ENCODE measurements at regions of chr16 and their contacts with region 1.

Region 1: GRCh38 chr16:82263521-82264143 is 93.6 kb upstream of the MPHOSPH6 start:
- DNase-seq: peak; percentile 75
- H3K4me3 Mint-ChIP-seq: no peak overlapping the region
- H3K27ac Mint-ChIP-seq: no peak overlapping the region
- H3K4me1 Mint-ChIP-seq: no peaks in the 10 kb centered on the region
- H3K27me3 Mint-ChIP-seq: peaks cover 75% of the 10 kb centered on the region
- CTCF ChIP-seq: peak; percentile 91

Region 2: GRCh38 chr16:81567987-81568748 is 695.5 kb before region 1 on chr16:
- CTCF ChIA-PET with region 1: no interaction called
- POLR2A ChIA-PET with region 1: no interaction called
- intact Hi-C with region 1: no loop called
- DNase-seq: peak; percentile 86
- H3K4me3 Mint-ChIP-seq: no peak overlapping the region
- H3K27ac Mint-ChIP-seq: peak overlapping the region; percentile 21
- H3K4me1 Mint-ChIP-seq: peaks cover 31% of the 10 kb centered on the region
- H3K27me3 Mint-ChIP-seq: no peaks in the 10 kb centered on the region
- CTCF ChIP-seq: no peak

Region 3: DNA sequence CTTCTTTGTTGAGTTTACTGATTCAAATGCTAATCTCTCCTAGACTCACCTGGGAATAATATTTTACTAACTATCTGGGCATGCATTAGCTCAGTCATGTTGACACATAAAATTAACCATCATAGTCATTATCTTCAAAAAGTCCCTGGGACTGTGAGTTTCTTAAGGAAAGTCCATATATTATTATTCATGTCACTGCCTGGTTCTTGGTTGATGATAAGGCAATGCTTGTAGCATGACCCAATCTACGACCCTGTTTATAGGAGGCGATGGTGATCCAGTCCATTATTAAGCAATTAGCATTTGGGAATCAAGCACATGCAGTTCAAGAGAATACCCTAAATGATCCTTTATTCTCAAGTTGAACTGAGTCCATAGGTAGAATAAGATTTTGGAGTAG is 38.8 kb before region 1 on chr16:
- CTCF ChIA-PET with region 1: interaction called, 11 read pairs
- POLR2A ChIA-PET with region 1: no interaction called
- intact Hi-C with region 1: no loop called
- DNase-seq: no peak
- H3K4me3 Mint-ChIP-seq: no peak overlapping the region
- H3K27ac Mint-ChIP-seq: no peak overlapping the region
- H3K4me1 Mint-ChIP-seq: no peaks in the 10 kb centered on the region
- H3K27me3 Mint-ChIP-seq: peaks cover 24% of the 10 kb centered on the region
- CTCF ChIP-seq: no peak

Region 4: DNA sequence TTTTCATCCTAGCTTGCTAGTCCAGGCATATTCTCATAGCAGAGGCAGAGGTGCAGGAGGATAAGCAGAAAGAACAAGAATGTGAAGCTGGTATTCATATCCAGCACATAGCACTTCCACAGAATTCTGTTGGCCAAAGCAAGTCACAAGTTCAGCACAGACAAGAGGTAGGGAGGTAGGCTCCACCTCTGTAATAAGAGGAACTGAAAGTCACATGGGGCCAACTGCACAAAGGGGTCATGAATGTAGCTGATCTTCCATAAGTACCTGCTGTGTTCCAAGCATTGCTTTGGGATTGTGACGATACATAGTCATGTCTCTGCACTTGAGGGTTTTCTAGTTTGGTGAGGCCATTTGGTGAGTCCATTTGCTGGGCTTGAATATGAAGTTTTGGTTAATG is 17.2 kb after region 1 on chr16:
- CTCF ChIA-PET with region 1: interaction called, 32 read pairs
- POLR2A ChIA-PET with region 1: no interaction called
- intact Hi-C with region 1: no loop called
- DNase-seq: no peak
- H3K4me3 Mint-ChIP-seq: no peak overlapping the region
- H3K27ac Mint-ChIP-seq: no peak overlapping the region
- H3K4me1 Mint-ChIP-seq: no peaks in the 10 kb centered on the region
- H3K27me3 Mint-ChIP-seq: peaks cover 77% of the 10 kb centered on the region
- CTCF ChIP-seq: no peak

Region 5: DNA sequence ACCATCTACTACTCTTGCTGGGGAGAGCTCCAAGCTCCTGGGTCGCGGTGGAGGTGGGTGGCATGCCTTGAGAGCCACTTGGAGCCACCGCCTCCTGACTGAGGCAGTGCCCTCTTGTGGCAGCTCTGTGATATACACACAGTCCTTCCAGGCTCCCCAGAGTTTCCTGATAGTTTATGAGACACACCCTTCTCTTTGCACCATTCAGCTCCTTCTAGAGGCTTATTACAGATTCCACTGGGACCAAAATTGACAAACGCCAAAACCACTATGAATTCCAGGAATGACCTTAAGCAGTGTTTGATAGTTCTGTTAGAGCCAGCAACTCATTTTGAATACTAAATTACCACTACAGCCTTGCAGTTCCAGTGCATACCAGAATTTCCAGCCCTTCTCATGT is 193.1 kb after region 1 on chr16:
- CTCF ChIA-PET with region 1: interaction called, 43 read pairs
- POLR2A ChIA-PET with region 1: no interaction called
- intact Hi-C with region 1: no loop called
- DNase-seq: peak; percentile 74
- H3K4me3 Mint-ChIP-seq: no peak overlapping the region
- H3K27ac Mint-ChIP-seq: no peak overlapping the region
- H3K4me1 Mint-ChIP-seq: peaks cover 17% of the 10 kb centered on the region
- H3K27me3 Mint-ChIP-seq: peaks cover 82% of the 10 kb centered on the region
- CTCF ChIP-seq: peak; percentile 70

Region 6: GRCh38 chr16:82621796-82622195 is 358.2 kb after region 1 on chr16:
- CTCF ChIA-PET with region 1: interaction called, 7 read pairs
- POLR2A ChIA-PET with region 1: no interaction called
- intact Hi-C with region 1: loop called (anchors 2 kb)
- DNase-seq: peak; percentile 25
- H3K4me3 Mint-ChIP-seq: no peak overlapping the region
- H3K27ac Mint-ChIP-seq: no peak overlapping the region
- H3K4me1 Mint-ChIP-seq: no peaks in the 10 kb centered on the region
- H3K27me3 Mint-ChIP-seq: no peaks in the 10 kb centered on the region
- CTCF ChIP-seq: no peak

Region 7: GRCh38 chr16:83356266-83356665 is 1092.6 kb after region 1 on chr16:
- CTCF ChIA-PET with region 1: interaction called, 20 read pairs
- POLR2A ChIA-PET with region 1: interaction called, 5 read pairs
- intact Hi-C with region 1: no loop called
- DNase-seq: peak; percentile 77
- H3K4me3 Mint-ChIP-seq: no peak overlapping the region
- H3K27ac Mint-ChIP-seq: no peak overlapping the region
- H3K4me1 Mint-ChIP-seq: no peaks in the 10 kb centered on the region
- H3K27me3 Mint-ChIP-seq: no peaks in the 10 kb centered on the region
- CTCF ChIP-seq: peak; percentile 43